CD8-positive, alpha-beta T cell (primary cell): ENCODE measurements at regions of chr1 and their contacts with region 1.

Region 1: GRCh38 chr1:89454845-89455521 is 69.6 kb upstream of the LRRC8B start:
- DNase-seq: peak; percentile 15 to 77 (median 60)
- ATAC-seq: peak; percentile 94
- H3K4me3 ChIP-seq: no peak overlapping the region
- H3K4me3 Mint-ChIP-seq: no peak overlapping the region
- H3K27ac ChIP-seq: no peak overlapping the region
- H3K27ac Mint-ChIP-seq: no peak overlapping the region
- H3K4me1 ChIP-seq: no peaks in the 10 kb centered on the region
- H3K4me1 Mint-ChIP-seq: peaks cover 7% of the 10 kb centered on the region
- H3K27me3 ChIP-seq: no peaks in the 10 kb centered on the region
- H3K27me3 Mint-ChIP-seq: peaks cover 7% of the 10 kb centered on the region
- CTCF ChIP-seq: peak; percentile 96

Region 2: DNA sequence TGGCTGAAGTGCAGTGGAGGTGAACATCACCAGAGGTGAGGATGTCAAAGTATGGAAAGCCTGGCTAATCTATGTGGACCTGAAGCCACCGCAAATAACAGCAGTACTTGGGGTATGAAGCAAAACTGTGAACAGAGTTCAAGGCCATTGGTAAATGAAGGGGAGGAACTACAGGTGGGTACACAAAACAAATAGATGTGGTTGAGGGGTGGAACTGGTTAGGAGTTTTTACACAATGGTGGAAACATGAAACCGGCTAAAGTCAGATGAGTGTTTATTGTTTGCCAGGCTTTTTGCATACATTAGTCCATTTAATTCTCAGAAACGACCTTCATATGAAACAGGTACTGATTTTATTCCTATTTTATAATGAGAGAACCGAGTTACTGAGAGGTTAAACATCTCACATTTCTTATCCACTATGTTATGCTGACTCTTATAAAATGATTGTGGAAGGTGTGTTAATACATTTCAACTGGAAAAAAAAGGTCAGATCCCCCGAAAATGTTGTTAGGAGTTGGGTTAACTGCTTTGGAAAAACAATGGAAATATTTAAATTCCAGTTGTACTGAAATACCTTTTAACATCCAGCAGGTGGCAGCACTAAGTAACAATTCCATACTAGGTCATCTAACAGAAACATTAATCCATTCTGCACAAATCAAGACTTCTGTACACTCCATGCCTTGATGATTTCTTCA is 519.3 kb before region 1 on chr1:
- CTCF ChIA-PET with region 1: interaction called, 3 read pairs
- POLR2A ChIA-PET with region 1: no interaction called
- intact Hi-C with region 1: loop called in 1 of 2 experiments (anchors 1 kb)
- DNase-seq: peak in 3 of 9 experiments; percentile 8 to 65 (median 53)
- ATAC-seq: peak; percentile 46
- H3K4me3 ChIP-seq: no peak overlapping the region
- H3K4me3 Mint-ChIP-seq: no peak overlapping the region
- H3K27ac ChIP-seq: no peak overlapping the region
- H3K27ac Mint-ChIP-seq: no peak overlapping the region
- H3K4me1 ChIP-seq: no peaks in the 10 kb centered on the region
- H3K4me1 Mint-ChIP-seq: peaks cover 6% of the 10 kb centered on the region
- H3K27me3 ChIP-seq: no peaks in the 10 kb centered on the region
- H3K27me3 Mint-ChIP-seq: no peaks in the 10 kb centered on the region
- CTCF ChIP-seq: peak; percentile 81

Region 3: DNA sequence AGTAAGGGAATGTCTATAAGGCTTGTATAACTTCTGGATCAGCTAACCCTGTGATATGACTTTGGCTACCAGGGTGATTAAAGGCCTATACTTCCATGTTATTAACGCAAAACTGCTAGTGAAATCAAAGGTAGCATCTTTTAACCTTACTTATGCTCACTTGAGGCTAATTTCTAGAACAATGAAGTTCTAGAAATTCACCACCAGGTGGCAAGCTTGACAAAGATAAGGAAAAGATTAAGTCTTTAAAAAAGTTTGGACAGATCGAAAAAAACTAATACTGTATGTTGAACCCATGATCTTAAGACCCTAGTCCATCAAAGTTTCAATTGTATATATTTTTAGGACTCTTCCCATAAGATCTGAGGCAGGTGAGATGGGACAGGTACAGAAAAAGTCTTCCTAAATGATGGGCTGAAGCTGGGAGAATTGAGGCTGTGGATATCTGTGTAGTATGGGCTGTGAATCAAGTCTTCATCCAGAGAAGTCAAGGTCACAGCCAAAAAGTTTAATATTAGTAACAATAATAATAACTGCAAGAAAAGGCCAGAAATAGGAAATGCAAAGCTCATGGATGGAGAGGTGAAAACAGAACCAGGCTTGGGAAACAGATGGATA is 481.4 kb before region 1 on chr1:
- CTCF ChIA-PET with region 1: interaction called, 41 read pairs
- POLR2A ChIA-PET with region 1: no interaction called
- intact Hi-C with region 1: loop called (anchors 1 kb)
- DNase-seq: peak in 2 of 9 experiments; percentile 56 to 66
- ATAC-seq: peak; percentile 52
- H3K4me3 ChIP-seq: no peak overlapping the region
- H3K4me3 Mint-ChIP-seq: no peak overlapping the region
- H3K27ac ChIP-seq: no peak overlapping the region
- H3K27ac Mint-ChIP-seq: no peak overlapping the region
- H3K4me1 ChIP-seq: no peaks in the 10 kb centered on the region
- H3K4me1 Mint-ChIP-seq: peaks cover 17% of the 10 kb centered on the region
- H3K27me3 ChIP-seq: no peaks in the 10 kb centered on the region
- H3K27me3 Mint-ChIP-seq: no peaks in the 10 kb centered on the region
- CTCF ChIP-seq: peak; percentile 75

Region 4: DNA sequence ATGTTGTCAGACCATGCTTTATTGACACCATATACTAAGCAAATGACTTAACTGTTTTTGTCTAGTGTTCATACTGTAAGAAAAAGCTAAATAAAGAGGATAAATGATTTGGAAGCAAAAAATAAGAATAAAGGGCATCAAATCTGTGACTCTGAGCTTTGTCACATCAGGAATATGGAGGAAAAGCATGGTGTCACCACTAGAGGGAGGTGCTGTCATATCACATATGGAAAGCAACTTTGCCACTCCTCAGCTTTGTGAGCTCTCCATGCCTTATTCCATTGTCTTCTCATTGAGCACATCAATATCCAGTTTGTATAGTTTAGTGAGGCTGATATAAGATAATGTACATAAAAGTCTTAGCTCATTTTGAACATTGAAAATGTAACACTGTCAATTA is 369.2 kb before region 1 on chr1:
- CTCF ChIA-PET with region 1: interaction called, 4 read pairs
- POLR2A ChIA-PET with region 1: no interaction called
- intact Hi-C with region 1: loop called (anchors 1 to 2 kb)
- DNase-seq: peak in 4 of 9 experiments; percentile 33 to 73 (median 51)
- ATAC-seq: peak; percentile 57
- H3K4me3 ChIP-seq: no peak overlapping the region
- H3K4me3 Mint-ChIP-seq: no peak overlapping the region
- H3K27ac ChIP-seq: no peak overlapping the region
- H3K27ac Mint-ChIP-seq: no peak overlapping the region
- H3K4me1 ChIP-seq: no peaks in the 10 kb centered on the region
- H3K4me1 Mint-ChIP-seq: no peaks in the 10 kb centered on the region
- H3K27me3 ChIP-seq: no peaks in the 10 kb centered on the region
- H3K27me3 Mint-ChIP-seq: no peaks in the 10 kb centered on the region
- CTCF ChIP-seq: peak; percentile 59

Region 5: GRCh38 chr1:89322402-89322801 is 132.6 kb before region 1 on chr1:
- CTCF ChIA-PET with region 1: no interaction called
- POLR2A ChIA-PET with region 1: no interaction called
- intact Hi-C with region 1: no loop called
- DNase-seq: no peak
- ATAC-seq: no peak
- H3K4me3 ChIP-seq: no peak overlapping the region
- H3K4me3 Mint-ChIP-seq: no peak overlapping the region
- H3K27ac ChIP-seq: no peak overlapping the region
- H3K27ac Mint-ChIP-seq: no peak overlapping the region
- H3K4me1 ChIP-seq: no peaks in the 10 kb centered on the region
- H3K4me1 Mint-ChIP-seq: peaks cover 3% of the 10 kb centered on the region
- H3K27me3 ChIP-seq: no peaks in the 10 kb centered on the region
- H3K27me3 Mint-ChIP-seq: no peaks in the 10 kb centered on the region
- CTCF ChIP-seq: no peak